Activated CD4-positive, alpha-beta T cell treated with anti-CD3 and anti-CD28 coated beads for 36 hours (primary cell): ENCODE measurements at regions of chr4 and their contacts with region 1.

Region 1: DNA sequence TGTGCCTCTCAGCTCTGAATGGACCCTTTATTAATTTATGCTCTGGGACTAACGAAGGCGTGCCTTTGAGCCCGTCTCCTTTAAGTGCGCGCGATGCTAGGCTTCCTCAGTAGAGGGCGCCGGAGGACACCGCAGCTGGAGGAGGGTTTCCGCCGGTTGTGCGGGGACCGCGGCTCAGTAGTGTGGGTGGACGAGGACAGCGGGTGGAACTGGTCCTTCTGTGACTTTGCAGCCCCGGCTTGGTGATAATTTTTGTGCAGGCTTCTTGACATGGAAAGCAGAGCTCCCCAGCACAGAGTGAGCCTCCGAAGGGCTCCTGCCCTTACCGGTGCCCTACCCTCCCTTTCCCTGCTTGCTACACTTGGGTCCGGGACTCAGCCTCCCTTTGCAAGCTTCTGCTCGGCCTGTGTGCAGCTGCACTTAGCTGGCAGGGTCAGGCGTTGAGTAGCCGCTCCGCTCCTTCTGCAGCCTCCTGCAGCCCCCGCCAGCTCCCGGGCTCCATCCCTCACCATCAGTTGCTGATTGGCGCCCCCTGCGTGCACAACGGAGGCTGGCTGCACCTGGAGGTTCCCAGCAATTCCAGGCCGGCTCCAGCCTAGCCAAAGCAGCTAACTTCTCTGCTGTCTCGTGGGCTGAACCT is 26.8 kb upstream of the BOD1L1 start:
- DNase-seq: peak; percentile 90
- ATAC-seq: peak; percentile 91
- H3K4me3 Mint-ChIP-seq: peak overlapping the region; percentile 66
- H3K27ac Mint-ChIP-seq: no peak overlapping the region
- H3K4me1 Mint-ChIP-seq: peaks cover 12% of the 10 kb centered on the region
- H3K27me3 Mint-ChIP-seq: peaks cover 13% of the 10 kb centered on the region

Region 2: DNA sequence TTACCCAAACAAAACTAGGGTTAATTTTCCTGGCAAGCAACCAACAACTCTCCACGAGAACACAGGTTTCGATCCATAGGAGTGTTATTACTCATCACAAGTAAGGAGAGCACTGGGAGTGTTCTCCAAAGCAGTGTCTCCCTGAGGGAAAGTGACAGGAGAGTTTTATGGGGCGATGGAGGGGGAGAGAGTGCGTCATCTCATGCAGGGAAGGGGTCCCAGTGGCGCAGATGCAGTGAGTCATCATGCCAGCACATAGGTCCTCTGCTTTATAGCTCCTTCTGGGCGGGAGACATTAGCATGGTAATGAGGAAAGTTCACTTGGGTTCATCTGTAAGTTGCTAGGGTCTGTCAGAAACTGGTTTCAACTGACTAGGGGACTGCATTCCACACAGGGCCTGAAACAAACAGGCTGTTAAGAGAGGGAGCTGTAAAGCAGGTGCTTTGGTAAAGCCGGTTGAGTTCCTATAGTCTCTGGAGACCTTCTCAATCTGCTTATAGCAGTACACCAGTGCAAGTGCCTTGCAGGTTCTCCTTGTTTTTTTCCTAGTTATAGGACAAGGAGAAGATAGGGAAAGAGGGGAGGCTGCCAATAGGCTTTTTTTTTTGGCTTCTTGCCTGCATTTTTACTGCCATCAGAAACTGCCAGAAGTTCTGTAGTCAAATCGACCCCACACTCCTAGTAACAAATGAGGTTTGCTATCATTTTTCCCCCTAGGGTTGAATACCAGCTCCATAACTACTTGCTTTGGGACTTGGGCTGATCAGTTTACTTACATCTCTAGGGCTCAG is 13.9 kb before region 1 on chr4:
- CTCF ChIA-PET with region 1: interaction called, 10 read pairs
- POLR2A ChIA-PET with region 1: no interaction called
- intact Hi-C with region 1: no loop called
- DNase-seq: no peak
- ATAC-seq: no peak
- H3K4me3 Mint-ChIP-seq: no peak overlapping the region
- H3K27ac Mint-ChIP-seq: no peak overlapping the region
- H3K4me1 Mint-ChIP-seq: no peaks in the 10 kb centered on the region
- H3K27me3 Mint-ChIP-seq: peaks cover 14% of the 10 kb centered on the region

Region 3: DNA sequence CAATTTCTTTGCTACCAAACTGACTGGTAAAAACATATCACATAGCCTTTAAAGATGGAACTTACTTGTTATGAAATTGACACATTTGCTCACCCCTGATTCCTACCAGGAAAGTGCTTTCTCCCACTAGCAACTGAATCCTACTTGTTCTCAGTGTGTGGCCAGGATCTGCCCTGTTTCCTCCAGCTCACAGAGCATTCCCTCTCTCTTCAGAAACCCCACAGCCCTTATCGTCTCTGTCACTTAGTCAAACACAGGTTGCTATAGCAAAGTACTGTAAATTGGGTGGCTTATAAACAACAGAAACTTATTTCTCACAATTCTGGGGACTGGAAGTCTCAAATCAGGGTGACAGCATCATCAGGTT is 238.4 kb after region 1 on chr4:
- CTCF ChIA-PET with region 1: no interaction called
- POLR2A ChIA-PET with region 1: no interaction called
- intact Hi-C with region 1: loop called (anchors 2 to 10 kb)
- DNase-seq: no peak
- ATAC-seq: no peak
- H3K4me3 Mint-ChIP-seq: no peak overlapping the region
- H3K27ac Mint-ChIP-seq: peak overlapping the region; percentile 88
- H3K4me1 Mint-ChIP-seq: peaks cover 20% of the 10 kb centered on the region
- H3K27me3 Mint-ChIP-seq: peaks cover 6% of the 10 kb centered on the region

Region 4: GRCh38 chr4:14254252-14254651 is 600.0 kb after region 1 on chr4:
- CTCF ChIA-PET with region 1: interaction called, 3 read pairs
- POLR2A ChIA-PET with region 1: no interaction called
- intact Hi-C with region 1: loop called in 1 of 2 experiments (anchors 5 kb)
- DNase-seq: peak; percentile 37
- ATAC-seq: no peak
- H3K4me3 Mint-ChIP-seq: no peak overlapping the region
- H3K27ac Mint-ChIP-seq: no peak overlapping the region
- H3K4me1 Mint-ChIP-seq: no peaks in the 10 kb centered on the region
- H3K27me3 Mint-ChIP-seq: no peaks in the 10 kb centered on the region

Region 5: GRCh38 chr4:14856076-14856933 is 1202.0 kb after region 1 on chr4:
- CTCF ChIA-PET with region 1: no interaction called
- POLR2A ChIA-PET with region 1: no interaction called
- intact Hi-C with region 1: loop called in 1 of 2 experiments (anchors 5 kb)
- DNase-seq: peak; percentile 86
- ATAC-seq: peak; percentile 94
- H3K4me3 Mint-ChIP-seq: peak overlapping the region; percentile 3
- H3K27ac Mint-ChIP-seq: peak overlapping the region; percentile 89
- H3K4me1 Mint-ChIP-seq: peaks cover 28% of the 10 kb centered on the region
- H3K27me3 Mint-ChIP-seq: peaks cover 19% of the 10 kb centered on the region

Region 6: GRCh38 chr4:15396157-15396800 is 1742.0 kb after region 1 on chr4:
- CTCF ChIA-PET with region 1: no interaction called
- POLR2A ChIA-PET with region 1: no interaction called
- intact Hi-C with region 1: loop called in 1 of 2 experiments (anchors 5 kb)
- DNase-seq: peak; percentile 79
- ATAC-seq: peak; percentile 84
- H3K4me3 Mint-ChIP-seq: no peak overlapping the region
- H3K27ac Mint-ChIP-seq: no peak overlapping the region
- H3K4me1 Mint-ChIP-seq: peaks cover 26% of the 10 kb centered on the region
- H3K27me3 Mint-ChIP-seq: no peaks in the 10 kb centered on the region

Region 7: DNA sequence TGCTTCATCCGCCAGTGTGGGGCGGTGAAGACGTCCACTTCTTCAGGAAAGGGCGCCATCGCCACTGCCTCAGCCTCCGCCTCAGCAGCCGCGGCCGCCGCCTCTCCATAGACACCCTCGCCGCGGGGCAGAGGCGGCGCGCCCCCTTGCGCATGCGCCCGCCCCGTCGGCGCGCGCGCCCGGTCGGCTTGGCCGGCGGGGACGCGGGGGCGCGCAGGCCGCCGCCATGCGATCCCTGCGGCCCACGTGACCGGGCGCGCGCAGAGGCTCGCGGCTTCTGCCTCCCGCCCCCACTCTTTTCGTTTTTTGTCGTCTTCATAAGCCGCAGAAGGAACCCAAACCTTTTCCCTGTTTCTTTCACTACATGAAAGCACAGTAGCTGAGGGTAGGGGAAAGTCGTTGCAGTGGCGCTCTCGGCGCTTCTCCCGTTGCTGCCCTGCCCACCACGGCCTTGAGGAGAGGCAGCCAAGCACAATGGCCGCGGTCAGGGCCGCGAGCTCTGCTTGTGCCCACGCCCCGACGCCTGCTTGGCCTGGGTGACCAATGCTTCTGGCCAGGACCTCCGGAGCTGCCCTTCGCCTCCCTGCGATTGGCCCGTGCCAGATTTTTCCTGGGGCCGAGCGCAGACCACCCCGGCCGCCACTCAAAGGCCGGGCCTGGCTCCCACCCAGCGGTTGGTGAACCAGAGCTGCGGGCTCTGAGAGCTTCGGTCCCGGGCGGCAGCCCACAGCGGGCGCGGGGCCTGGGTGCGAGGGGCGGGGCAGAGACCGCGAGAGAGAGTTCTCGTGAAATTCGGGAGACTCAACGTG is 2001.2 kb after region 1 on chr4 and contains the start of gene FBXL5:
- CTCF ChIA-PET with region 1: no interaction called
- POLR2A ChIA-PET with region 1: no interaction called
- intact Hi-C with region 1: loop called in 1 of 2 experiments (anchors 10 kb)
- DNase-seq: peak; percentile 90
- ATAC-seq: peak; percentile 76
- H3K4me3 Mint-ChIP-seq: peak within 1 kb of the TSS; percentile 99
- H3K27ac Mint-ChIP-seq: peak within 1 kb of the TSS; percentile 97
- H3K4me1 Mint-ChIP-seq: peaks cover 57% of the 10 kb centered on the region
- H3K27me3 Mint-ChIP-seq: no peaks in the 10 kb centered on the region
- total RNA-seq, gene FBXL5: 20.1 to 29.1 TPM